Calu3 (cell line): ENCODE measurements at regions of chr3 and their contacts with region 1.

Region 1: DNA sequence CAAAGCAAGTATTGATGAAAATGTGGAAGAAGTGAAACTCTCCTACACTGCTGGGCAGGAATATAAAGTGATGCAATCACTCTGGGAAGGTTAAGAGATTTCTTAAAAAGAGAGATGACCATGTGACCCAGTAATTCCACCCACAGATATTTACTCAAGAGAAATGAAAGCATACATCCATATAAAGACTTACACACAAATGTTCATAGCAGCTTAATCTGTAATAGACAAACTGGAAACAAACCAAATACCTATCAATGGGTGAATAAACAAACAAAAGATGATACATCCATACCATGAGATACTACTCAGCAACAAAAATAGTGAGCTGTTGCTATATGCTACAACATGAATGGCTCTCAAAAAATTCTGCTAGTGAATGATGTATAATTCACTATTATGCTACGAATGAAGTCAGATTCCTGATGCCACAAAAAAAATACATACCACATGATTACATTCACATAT is 463.3 kb downstream of the MAGI1 start:
- DNase-seq: no peak
- H3K4me3 Mint-ChIP-seq: no peak overlapping the region
- H3K27ac Mint-ChIP-seq: peak overlapping the region; percentile 4
- H3K4me1 Mint-ChIP-seq: peaks cover 42% of the 10 kb centered on the region
- H3K27me3 Mint-ChIP-seq: no peaks in the 10 kb centered on the region
- CTCF ChIP-seq: no peak

Region 2: GRCh38 chr3:64049136-64049535 is 1526.3 kb before region 1 on chr3:
- CTCF ChIA-PET with region 1: no interaction called
- intact Hi-C with region 1: no loop called
- DNase-seq: no peak
- H3K4me3 Mint-ChIP-seq: no peak overlapping the region
- H3K27ac Mint-ChIP-seq: no peak overlapping the region
- H3K4me1 Mint-ChIP-seq: no peaks in the 10 kb centered on the region
- H3K27me3 Mint-ChIP-seq: peaks cover 26% of the 10 kb centered on the region
- CTCF ChIP-seq: no peak

Region 3: GRCh38 chr3:65604863-65605526 is 29.6 kb after region 1 on chr3:
- CTCF ChIA-PET with region 1: no interaction called
- intact Hi-C with region 1: loop called (anchors 1 kb)
- DNase-seq: no peak
- H3K4me3 Mint-ChIP-seq: no peak overlapping the region
- H3K27ac Mint-ChIP-seq: no peak overlapping the region
- H3K4me1 Mint-ChIP-seq: peaks cover 36% of the 10 kb centered on the region
- H3K27me3 Mint-ChIP-seq: no peaks in the 10 kb centered on the region
- CTCF ChIP-seq: no peak